Activated T-helper 1 cell treated with anti-CD3 and anti-CD28 coated beads, Interleukin-12 subunit alpha, Interleukin-12 subunit beta, Interleukin-2, Interleukin-4 antibody, amounts not matched to agents 30 ng/mL and 10 ng/mL and 1 ng/mL, durations not matched to agents 14 hours and 24 hours and 36 hours (primary cell): ENCODE measurements at regions of chr9 and their contacts with region 1.

Region 1: GRCh38 chr9:129580211-129580915 is 40.5 kb downstream of the C9orf50 start:
- DNase-seq: peak; percentile 72
- H3K4me3 Mint-ChIP-seq: peak overlapping the region; percentile 84
- H3K27ac Mint-ChIP-seq: peak overlapping the region; percentile 83
- H3K4me1 Mint-ChIP-seq: peaks cover 90% of the 10 kb centered on the region
- H3K27me3 Mint-ChIP-seq: no peaks in the 10 kb centered on the region

Region 2: GRCh38 chr9:129597355-129598088 is 17.2 kb after region 1 on chr9:
- intact Hi-C with region 1: loop called (anchors 2 kb)
- DNase-seq: peak; percentile 46
- H3K4me3 Mint-ChIP-seq: peak overlapping the region; percentile 55
- H3K27ac Mint-ChIP-seq: peak overlapping the region; percentile 75
- H3K4me1 Mint-ChIP-seq: peaks cover 34% of the 10 kb centered on the region
- H3K27me3 Mint-ChIP-seq: no peaks in the 10 kb centered on the region

Region 3: DNA sequence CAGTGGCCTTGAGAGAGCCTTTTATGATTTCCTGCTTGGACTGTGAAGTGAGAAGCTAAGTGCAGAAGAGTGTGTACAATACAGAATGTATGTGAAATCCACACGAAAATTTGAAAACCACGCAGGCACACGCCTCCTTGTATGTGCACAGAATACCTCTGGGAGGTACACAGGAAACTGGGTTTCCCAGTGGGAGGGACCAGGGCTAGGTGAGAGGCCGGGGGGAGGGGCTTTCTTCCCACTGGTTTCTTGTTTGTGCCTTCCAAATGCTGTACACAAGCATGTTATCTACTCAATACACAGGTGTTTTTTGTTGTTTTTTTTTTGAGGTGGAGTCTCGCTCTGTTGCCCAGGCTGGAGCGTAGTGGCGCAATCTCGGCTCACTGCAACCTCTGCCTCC is 24.4 kb after region 1 on chr9:
- intact Hi-C with region 1: loop called (anchors 1 kb)
- DNase-seq: no peak
- H3K4me3 Mint-ChIP-seq: peak overlapping the region; percentile 30
- H3K27ac Mint-ChIP-seq: peak overlapping the region; percentile 81
- H3K4me1 Mint-ChIP-seq: peaks cover 52% of the 10 kb centered on the region
- H3K27me3 Mint-ChIP-seq: no peaks in the 10 kb centered on the region

Region 4: DNA sequence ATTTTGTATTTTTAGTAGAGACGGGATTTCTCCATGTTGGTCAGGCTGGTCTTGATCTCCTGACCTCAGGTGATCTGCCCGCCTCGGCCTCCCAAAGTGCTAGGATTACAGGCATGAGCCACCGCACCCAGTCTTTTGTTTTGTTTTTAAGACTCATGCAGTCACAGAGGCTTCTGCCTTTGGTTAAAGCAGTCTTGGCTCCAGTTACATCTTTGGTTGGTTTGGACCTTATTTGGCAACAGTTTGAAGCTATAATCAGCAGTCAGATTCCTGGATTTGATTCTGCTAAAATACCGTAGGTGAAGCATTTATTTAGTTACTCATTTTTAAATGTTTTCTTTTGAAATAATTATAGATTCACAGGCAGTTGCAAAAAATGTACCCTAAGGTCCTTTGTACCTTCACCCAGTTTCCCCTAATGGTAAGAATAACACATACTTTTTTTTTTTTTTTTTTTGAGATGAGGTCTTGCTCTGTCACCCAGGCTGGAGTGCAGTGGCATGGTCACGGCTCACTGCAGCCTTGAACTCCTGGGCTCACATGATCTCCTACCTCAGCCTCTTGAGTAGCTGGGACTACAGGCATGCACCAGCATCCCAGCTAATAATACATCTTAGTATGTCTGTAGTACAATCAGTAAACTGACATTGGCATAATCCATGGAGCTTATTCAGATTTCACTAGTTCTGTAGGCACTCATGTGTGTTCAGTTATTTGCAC is 270.6 kb after region 1 on chr9:
- intact Hi-C with region 1: no loop called
- DNase-seq: no peak
- H3K4me3 Mint-ChIP-seq: no peak overlapping the region
- H3K27ac Mint-ChIP-seq: no peak overlapping the region
- H3K4me1 Mint-ChIP-seq: peaks cover 24% of the 10 kb centered on the region
- H3K27me3 Mint-ChIP-seq: no peaks in the 10 kb centered on the region

Region 5: DNA sequence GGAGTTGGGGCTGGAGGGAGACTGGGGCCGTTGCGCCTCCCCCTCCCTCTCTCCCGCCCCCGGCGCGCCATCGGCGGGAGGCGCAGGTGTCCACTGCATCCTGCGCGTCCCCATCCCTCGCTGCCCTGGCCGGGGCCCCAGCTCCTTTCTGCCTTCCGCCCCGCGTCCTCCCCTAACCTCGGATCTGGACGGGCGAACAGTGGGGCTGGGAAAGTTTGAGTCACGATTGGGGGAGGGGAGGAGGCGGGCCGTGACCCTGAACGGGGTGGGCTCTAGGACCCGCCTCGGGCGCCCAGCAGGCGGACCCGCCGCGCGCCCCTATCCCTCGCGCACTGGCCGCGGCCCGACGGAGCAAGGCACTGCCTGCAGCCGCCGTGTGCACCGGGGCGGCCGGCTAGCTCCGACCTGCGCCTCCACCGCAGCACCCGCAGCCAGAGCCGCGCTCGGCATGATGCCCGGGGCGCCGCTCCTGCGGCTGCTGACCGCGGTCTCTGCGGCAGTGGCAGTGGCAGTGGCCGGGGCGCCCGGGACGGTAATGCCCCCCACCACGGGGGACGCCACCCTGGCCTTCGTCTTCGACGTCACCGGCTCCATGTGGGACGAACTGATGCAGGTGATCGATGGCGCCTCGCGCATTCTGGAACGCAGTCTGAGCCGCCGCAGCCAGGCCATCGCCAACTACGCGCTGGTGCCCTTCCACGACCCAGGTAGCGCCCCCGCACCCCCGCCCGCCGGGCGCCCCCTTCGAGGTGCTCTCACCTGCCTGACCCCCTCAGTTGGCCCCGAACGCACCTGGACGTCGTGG is 685.3 kb after region 1 on chr9 and contains the start of gene HMCN2:
- intact Hi-C with region 1: no loop called
- DNase-seq: no peak
- H3K4me3 Mint-ChIP-seq: no peak within 1 kb of the TSS
- H3K27ac Mint-ChIP-seq: no peak within 1 kb of the TSS
- H3K4me1 Mint-ChIP-seq: no peaks in the 10 kb centered on the region
- H3K27me3 Mint-ChIP-seq: peaks cover 54% of the 10 kb centered on the region
- total RNA-seq, gene HMCN2: not detected in 2 replicates